Colonic mucosa (tissue), 4 donors: ENCODE measurements at regions of chr7 and their contacts with region 1.

Region 1: DNA sequence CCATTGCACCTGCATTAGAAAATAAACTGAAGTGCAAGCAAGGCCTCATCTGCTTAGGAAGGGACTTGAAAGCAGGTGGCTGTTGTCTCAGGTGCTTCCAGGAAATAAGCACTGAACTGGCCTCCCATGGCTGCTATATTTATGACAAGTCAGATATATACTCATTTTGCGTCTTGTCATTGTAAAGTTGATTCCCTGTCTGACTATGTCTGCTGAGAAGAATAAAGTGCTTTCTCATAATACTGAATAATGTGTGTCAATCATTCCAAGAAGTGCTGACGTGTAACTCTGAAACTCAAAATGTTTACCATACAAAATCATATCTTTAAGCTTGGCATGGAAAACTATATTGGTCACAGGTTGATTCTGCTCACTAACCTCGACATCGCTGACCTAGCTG is 44.9 kb upstream of the SVOPL start:
- DNase-seq: no peak
- H3K4me3 ChIP-seq: no peak overlapping the region
- H3K27ac ChIP-seq: no peak overlapping the region
- H3K4me1 ChIP-seq: no peaks in the 10 kb centered on the region
- H3K27me3 ChIP-seq: no peaks in the 10 kb centered on the region
- CTCF ChIP-seq: no peak

Region 2: DNA sequence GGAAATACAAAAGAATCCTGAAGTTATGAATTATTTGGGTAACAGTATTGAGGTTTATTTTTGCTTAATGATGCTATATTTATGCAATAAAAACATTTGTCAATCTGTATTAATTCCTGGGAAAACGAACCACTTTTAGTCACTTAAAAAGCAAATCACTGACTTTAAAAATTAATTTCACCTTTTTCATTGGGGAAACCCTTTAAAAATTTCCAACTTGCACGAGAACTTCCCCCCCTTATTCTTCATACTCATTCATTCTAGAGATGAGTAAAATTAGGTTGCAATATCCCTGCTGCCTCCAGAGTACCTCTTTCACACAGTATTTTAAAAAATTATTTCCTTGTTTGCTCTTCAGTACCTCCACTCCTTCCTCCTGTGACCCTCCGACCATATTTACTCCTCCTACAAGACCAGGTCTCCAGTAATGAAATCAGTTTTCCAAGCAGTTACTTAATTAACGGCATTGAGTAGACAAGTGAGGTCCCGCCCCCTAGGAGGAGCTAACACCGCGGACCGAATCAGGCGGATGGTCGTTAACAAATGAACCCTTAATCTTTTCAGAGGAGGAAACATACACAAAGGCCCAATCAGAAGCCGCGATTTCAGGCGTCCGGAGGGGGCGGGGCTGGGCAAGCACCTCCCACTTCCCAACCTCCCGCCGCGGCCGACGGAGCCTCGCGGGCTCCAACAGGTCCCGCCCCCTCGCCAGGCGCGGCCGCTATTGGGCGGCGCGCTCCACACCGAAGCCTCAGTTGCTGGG is 286.5 kb before region 1 on chr7:
- intact Hi-C with region 1: loop called (anchors 10 kb)
- DNase-seq: peak; percentile 98
- H3K4me3 ChIP-seq: peak overlapping the region; percentile 26
- H3K27ac ChIP-seq: no peak overlapping the region
- H3K4me1 ChIP-seq: no peaks in the 10 kb centered on the region
- H3K27me3 ChIP-seq: no peaks in the 10 kb centered on the region
- CTCF ChIP-seq: no peak

Region 3: GRCh38 chr7:138542183-138542582 is 203.9 kb before region 1 on chr7:
- intact Hi-C with region 1: no loop called
- DNase-seq: no peak
- H3K4me3 ChIP-seq: no peak overlapping the region
- H3K27ac ChIP-seq: no peak overlapping the region
- H3K4me1 ChIP-seq: no peaks in the 10 kb centered on the region
- H3K27me3 ChIP-seq: no peaks in the 10 kb centered on the region
- CTCF ChIP-seq: no peak

Region 4: DNA sequence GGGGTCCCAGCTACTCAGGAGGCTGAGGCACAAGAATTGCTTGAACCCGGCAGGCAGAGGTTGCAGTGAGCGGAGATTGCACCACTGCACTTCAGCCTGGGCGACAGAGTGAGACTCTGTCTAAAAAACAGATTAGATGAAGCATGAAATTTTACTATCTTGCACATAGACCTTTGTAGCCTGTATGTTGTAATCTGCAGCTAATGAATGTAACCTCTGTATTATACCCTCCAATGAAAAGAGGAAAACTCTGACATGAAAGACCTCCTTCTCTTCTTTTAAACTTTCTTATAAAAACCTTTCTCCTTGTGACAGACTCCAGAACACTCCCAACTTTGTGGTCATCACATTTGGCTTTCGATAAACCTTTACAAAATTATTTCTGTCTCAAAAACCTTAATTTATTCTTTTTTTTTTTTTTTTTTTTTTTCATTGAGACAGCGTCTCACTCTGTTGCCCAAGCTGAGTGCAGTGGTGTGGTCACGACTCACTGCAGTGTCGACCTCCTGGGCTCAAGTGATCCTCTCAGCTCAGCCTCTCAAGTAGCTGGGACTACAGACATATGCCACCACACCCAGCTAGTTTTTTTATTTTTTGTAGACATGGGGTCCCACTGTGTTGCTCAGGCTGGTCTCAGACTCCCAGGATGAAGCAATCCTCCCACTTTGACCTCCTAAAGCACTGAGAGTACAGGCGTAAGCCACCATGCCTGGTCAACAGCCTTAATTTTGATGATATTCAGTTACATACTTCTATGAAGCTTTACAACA is 142.3 kb before region 1 on chr7:
- intact Hi-C with region 1: no loop called
- DNase-seq: no peak
- H3K4me3 ChIP-seq: no peak overlapping the region
- H3K27ac ChIP-seq: no peak overlapping the region
- H3K4me1 ChIP-seq: no peaks in the 10 kb centered on the region
- H3K27me3 ChIP-seq: no peaks in the 10 kb centered on the region
- CTCF ChIP-seq: no peak